ENCODE measurements at regions of chr1 and their contacts with region 1.

Region 1: DNA sequence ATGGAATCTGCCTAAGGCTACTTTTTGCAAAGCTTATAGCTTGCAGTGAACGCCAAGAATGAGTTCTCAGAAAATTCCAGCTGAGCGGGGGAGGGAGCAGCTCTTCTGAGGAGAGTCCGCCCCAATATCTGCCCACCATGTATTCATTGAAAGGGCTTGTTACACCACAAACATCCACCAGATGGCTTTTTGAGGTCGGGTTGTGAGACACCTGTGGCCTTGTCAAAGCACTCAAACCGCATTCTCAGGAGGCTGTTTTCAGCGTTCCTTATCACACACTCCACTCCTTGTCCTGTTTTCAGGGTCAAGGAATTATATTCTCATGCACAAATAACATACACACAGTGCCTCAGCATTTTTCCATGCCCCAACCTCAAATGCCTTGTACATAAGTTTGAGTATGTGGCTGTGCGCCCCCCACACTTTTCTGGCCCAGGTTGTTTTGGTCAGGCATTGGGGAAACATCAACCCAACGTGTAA is 3.9 kb upstream of the C4BPB start:
- DNase-seq: peak; percentile 61 to 65
- H3K4me3 ChIP-seq: no peak overlapping the region
- H3K27ac ChIP-seq: no peak overlapping the region
- H3K4me1 ChIP-seq: no peaks in the 10 kb centered on the region
- H3K27me3 ChIP-seq: no peaks in the 10 kb centered on the region
- CTCF ChIP-seq: peak; percentile 32 to 79 (median 66)
- POLR2A ChIP-seq: no peak

Region 2: GRCh38 chr1:207404849-207405525 is 320.2 kb after region 1 on chr1:
- intact Hi-C with region 1: loop called (anchors 5 kb)
- DNase-seq: no peak
- H3K4me3 ChIP-seq: no peak overlapping the region
- H3K27ac ChIP-seq: no peak overlapping the region
- H3K4me1 ChIP-seq: no peaks in the 10 kb centered on the region
- H3K27me3 ChIP-seq: no peaks in the 10 kb centered on the region
- CTCF ChIP-seq: peak; percentile 23 to 91 (median 66)
- POLR2A ChIP-seq: no peak

Measured in thyroid gland (tissue), 4 donors.